Activated naive CD4-positive, alpha-beta T cell treated with anti-CD3 and anti-CD28 coated beads for 36 hours (primary cell): ENCODE measurements at regions of chr15 and their contacts with region 1.

Region 1: DNA sequence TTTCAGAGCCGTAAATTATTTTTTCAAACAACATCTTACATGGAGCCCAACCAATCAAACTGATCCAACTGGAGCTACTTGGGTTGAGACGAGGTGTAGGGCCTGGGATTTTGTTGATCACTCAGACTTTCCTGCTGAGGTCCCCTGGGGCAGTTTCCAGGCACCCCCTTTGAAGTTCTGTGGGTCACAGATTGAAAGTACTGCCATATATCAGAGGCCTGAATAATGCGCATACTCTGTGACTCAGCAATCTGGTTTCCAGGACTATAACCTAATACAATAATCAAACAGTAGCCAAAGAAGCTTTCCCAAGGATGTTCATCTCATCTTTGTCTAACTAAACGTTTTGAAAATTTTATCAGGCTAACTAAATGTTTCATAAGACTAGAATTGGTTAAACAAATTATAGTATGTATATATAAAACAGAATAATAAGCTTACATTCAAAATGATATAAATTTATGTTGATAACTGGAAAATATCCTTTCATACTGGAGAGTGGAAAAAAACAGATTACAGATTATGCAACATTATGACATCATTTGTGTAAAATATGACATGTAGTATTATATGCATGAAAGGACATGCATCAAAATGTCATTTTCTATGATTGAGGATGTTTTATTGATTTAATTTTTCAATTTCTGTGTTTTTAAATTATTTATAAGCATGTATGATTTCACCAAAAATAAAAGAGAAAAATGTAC is 617.1 kb downstream of the NTRK3 start:
- DNase-seq: no peak
- H3K4me3 Mint-ChIP-seq: no peak overlapping the region
- H3K27ac Mint-ChIP-seq: no peak overlapping the region
- H3K4me1 Mint-ChIP-seq: peaks cover 41% of the 10 kb centered on the region
- H3K27me3 Mint-ChIP-seq: no peaks in the 10 kb centered on the region

Region 2: DNA sequence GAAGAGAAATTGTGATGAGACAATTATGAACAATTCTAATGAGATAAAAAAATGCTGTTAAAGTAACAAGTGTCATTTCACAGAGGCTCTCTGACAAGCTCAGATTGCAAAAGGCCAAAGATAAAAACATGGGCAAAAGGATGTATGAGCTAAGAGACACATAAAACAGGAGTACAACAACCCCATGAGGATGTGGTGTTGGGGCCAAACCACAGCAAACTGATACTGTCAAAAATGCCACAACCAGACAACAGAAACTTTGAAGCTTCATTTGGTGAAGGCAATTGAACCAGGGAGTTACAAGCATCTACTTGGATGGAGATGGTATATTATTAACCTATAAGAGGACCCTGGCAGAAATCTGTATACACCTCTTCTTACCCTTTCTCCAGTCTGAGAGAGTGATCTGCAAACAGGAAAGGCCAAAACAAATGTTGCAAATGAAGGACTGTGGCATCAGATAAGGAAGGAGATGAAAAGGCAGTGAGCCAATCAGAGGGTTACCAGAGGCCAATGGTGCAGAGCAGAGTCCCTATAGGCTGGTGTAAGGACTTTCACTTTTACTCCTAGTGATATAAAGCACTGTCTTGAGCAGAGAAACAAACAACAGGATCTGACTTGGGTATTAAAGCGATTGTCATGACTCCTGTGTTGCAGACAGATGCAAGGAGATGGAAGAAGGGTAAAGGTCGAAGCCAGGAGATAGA is 42.0 kb before region 1 on chr15:
- CTCF ChIA-PET with region 1: no interaction called
- intact Hi-C with region 1: loop called (anchors 5 kb)
- DNase-seq: peak; percentile 49
- H3K4me3 Mint-ChIP-seq: no peak overlapping the region
- H3K27ac Mint-ChIP-seq: no peak overlapping the region
- H3K4me1 Mint-ChIP-seq: peaks cover 16% of the 10 kb centered on the region
- H3K27me3 Mint-ChIP-seq: peaks cover 2% of the 10 kb centered on the region

Region 3: DNA sequence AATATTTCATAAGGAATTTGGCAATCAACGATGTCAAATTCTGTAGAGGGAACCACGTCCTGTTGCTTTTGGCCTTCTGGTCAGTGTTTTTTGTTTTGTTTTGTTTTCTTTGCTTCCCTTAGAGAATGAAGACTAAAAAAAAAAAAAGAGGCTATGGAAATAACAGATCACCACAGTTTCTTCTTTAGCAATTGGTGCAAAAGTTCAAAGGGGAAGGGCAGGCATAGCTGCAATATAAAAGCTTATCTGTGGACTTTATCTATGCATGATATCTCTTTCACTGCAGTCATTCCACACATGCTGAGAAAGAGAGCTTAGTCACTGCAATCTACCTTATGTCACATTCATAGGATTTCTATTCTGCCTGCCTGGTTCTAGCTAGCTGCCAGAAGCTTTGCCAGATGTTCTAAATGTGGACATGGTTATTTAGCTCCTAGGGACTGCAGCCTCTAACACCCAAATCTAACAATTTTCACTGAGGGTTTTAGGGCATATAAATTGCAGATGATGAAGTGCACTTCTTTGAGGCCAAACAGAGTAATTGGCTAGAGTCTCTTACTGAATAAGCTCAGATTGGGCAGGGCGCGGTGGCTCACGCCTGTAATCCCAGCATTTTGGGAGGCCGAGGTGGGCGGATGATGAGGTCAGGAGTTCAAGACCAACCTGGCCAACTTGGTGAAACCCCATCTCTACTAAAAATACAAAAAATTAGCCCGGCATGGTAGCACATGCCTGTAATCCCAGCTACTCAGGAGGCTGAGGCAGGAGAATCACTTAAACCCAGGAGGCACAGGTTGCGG is 20.1 kb before region 1 on chr15:
- CTCF ChIA-PET with region 1: no interaction called
- intact Hi-C with region 1: no loop called
- DNase-seq: no peak
- H3K4me3 Mint-ChIP-seq: no peak overlapping the region
- H3K27ac Mint-ChIP-seq: no peak overlapping the region
- H3K4me1 Mint-ChIP-seq: peaks cover 2% of the 10 kb centered on the region
- H3K27me3 Mint-ChIP-seq: no peaks in the 10 kb centered on the region

Region 4: GRCh38 chr15:87681054-87681453 is 41.6 kb after region 1 on chr15:
- CTCF ChIA-PET with region 1: interaction called, 3 read pairs
- intact Hi-C with region 1: loop called (anchors 5 kb)
- DNase-seq: no peak
- H3K4me3 Mint-ChIP-seq: no peak overlapping the region
- H3K27ac Mint-ChIP-seq: no peak overlapping the region
- H3K4me1 Mint-ChIP-seq: peaks cover 28% of the 10 kb centered on the region
- H3K27me3 Mint-ChIP-seq: no peaks in the 10 kb centered on the region